A549 (cell line): ENCODE measurements at regions of chr3 and their contacts with region 1.

Region 1: GRCh38 chr3:107117922-107118536 is 259.2 kb upstream of the CCDC54 start:
- DNase-seq: peak; percentile 34 to 54
- ATAC-seq: peak; percentile 77 to 80
- H3K4me3 ChIP-seq: no peak overlapping the region
- H3K27ac ChIP-seq: no peak overlapping the region
- H3K4me1 ChIP-seq: no peaks in the 10 kb centered on the region
- CTCF ChIP-seq: peak; percentile 52
- EP300 ChIP-seq: no peak
- POLR2A ChIP-seq: no peak
- RAD21 ChIP-seq: peak; percentile 72 to 73

Region 2: DNA sequence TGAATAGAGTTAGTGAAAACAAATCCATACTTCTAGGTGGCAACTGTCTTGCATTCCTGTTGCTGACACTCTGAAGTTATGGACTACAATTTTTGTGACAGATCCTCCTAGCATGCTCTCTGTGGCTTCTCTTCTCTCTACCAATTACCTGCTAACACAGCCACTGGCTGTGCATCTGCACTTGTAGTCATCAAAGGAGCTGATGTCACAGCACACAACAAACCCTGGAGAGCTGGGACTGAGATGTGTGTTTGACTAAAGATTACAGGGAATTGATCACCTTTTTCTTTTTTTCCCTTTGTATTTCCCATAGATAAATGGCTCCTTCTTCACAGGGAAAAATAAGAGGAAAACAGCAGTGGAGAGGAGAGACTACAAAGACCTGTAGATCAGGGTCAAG is 19.2 kb before region 1 on chr3:
- CTCF ChIA-PET with region 1: interaction called, 16 read pairs
- POLR2A ChIA-PET with region 1: no interaction called
- DNase-seq: no peak
- ATAC-seq: no peak
- H3K4me3 ChIP-seq: no peak overlapping the region
- H3K27ac ChIP-seq: no peak overlapping the region
- H3K4me1 ChIP-seq: no peaks in the 10 kb centered on the region
- CTCF ChIP-seq: no peak
- EP300 ChIP-seq: no peak
- POLR2A ChIP-seq: no peak
- RAD21 ChIP-seq: no peak

Region 3: DNA sequence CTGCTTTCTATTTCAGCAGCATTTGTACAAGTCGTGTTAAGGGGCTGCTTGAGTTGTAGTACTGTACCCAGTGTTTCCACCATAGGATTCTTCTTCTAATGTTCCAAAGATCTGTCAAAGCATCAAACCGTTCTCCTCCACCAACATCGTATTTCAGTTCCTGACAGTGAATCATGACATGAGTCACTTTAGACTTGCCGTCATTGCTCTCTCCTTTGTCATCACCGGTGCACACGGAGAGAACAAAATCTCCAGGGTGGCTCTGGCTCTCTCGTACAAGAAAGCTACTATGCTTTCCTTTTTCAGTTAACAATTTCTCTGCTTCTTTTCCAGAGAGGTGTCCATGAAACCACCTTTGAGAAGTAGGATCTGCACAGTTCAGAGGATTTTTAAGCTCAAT is 11.7 kb before region 1 on chr3:
- CTCF ChIA-PET with region 1: interaction called, 38 read pairs
- POLR2A ChIA-PET with region 1: interaction called, 3 read pairs
- DNase-seq: peak; percentile 10 to 22
- ATAC-seq: peak; percentile 64 to 86; a peak in 5 of 6 replicates
- H3K4me3 ChIP-seq: no peak overlapping the region
- H3K27ac ChIP-seq: no peak overlapping the region; a peak in 1 of 6 replicates
- H3K4me1 ChIP-seq: no peaks in the 10 kb centered on the region
- CTCF ChIP-seq: no peak
- EP300 ChIP-seq: no peak
- POLR2A ChIP-seq: no peak
- RAD21 ChIP-seq: no peak